Heart left ventricle (tissue), 16 donors: ENCODE measurements at regions of chr15 and their contacts with region 1.

Region 1: DNA sequence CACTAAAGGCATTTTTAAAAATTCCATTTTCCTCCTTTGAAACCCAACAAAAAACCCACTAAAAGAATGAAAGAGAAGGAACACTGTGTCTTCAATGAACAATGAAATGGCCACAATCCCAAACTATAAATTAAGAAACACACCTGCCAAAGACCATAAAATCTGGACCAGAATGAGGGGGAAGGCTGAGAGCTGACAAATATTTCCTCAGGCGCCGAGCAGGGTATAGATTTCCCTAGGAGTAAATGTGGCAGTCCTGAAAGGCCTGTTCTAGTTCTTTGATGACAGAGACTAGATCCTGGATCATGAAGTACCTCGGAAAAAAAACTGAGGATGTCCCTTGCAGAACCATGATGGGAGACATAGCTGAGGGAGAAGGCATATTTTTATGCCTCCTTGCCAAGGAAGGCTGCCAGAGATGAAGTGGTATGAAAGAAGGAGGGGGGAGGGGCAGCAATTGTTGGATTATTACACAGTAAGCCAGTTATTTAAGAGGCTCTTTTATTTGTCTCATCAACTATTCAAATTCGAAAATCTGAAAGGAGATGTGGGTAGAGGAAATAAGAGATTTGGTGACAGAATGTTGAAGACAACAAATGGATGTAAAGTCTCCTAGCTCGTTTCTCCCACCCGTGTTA is 275.3 kb upstream of the GOLGA6L4 start:
- DNase-seq: no peak
- ATAC-seq: no peak
- H3K4me3 ChIP-seq: no peak overlapping the region
- H3K27ac ChIP-seq: no peak overlapping the region
- H3K4me1 ChIP-seq: no peaks in the 10 kb centered on the region
- H3K27me3 ChIP-seq: no peaks in the 10 kb centered on the region
- CTCF ChIP-seq: no peak
- POLR2A ChIP-seq: no peak

Region 2: DNA sequence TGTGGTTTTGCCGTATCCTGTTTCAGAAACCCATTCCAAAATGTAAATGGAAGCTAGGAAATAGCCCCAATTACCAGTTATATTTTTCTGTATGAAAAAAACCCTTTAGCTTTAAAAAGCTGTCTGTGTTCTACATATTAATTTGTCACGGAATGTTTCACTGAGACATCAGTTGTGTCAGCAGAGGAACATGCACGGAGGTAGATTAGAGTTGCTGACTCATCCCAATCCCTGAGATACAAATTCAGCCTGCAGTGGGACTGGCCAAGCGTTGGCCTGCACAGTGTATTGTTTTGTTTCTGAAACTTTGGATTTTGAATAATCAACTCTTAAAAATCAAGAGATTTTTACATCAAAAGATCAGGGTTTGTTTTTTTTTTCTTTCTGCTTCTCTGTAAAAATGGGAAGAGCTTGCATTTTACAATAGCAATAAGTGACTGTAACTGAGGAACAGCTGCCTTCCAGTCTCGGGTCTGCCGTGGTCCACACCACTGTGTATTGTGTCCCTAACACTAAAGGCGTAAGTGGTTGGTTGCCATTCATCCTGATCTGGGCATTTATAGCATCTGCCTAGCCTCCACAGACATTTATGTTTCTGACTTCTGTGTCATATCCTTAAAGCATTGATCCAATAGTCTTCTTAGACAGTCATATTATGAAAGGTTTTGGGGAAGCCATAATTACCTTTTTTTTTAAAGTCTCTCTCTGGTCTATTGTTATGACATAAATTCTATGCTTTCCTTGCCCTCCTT is 88.3 kb before region 1 on chr15:
- intact Hi-C with region 1: no loop called
- DNase-seq: no peak
- ATAC-seq: peak; percentile 41 to 78 (median 70)
- H3K4me3 ChIP-seq: no peak overlapping the region
- H3K27ac ChIP-seq: peak overlapping the region in 1 of 12 donors; percentile 43
- H3K4me1 ChIP-seq: peaks cover 0 to 32% (median 7%) of the 10 kb centered on the region in 12 donors
- H3K27me3 ChIP-seq: no peaks in the 10 kb centered on the region
- CTCF ChIP-seq: no peak
- POLR2A ChIP-seq: no peak

Region 3: DNA sequence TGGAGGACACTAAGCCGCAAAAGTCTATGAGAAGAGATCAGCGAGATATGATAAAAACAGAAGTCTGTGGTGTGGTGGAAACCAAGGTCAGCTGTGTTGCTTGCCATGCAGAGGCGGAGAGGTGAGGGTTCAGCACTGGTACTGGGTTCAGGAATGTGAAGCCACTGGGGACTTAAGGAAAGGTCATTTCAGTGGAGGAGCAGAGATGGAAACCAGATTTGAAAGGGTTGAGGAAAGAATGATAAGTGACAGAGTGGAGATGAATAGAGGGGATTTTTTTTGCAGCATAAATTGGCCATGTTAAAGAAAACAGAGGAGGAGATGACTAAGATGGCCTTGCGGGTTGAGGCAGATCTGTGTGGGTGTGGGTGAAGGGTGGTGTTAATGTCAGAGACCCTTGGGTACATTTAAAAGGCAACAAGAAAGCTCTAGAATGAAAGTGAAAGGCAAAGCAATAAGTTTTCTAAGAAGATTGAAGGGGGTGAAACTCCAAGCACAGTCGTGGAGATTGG is 40.9 kb before region 1 on chr15:
- intact Hi-C with region 1: loop called in 1 of 10 experiments (anchors 10 kb)
- DNase-seq: no peak
- ATAC-seq: no peak
- H3K4me3 ChIP-seq: no peak overlapping the region
- H3K27ac ChIP-seq: peak overlapping the region in 1 of 12 donors; percentile 0
- H3K4me1 ChIP-seq: no peaks in the 10 kb centered on the region
- H3K27me3 ChIP-seq: no peaks in the 10 kb centered on the region
- CTCF ChIP-seq: no peak
- POLR2A ChIP-seq: no peak